ENCODE measurements at regions of chr11 and their contacts with region 1.

Region 1: GRCh38 chr11:44519989-44520737 is 45.3 kb upstream of the CD82 start:
- DNase-seq: no peak
- ATAC-seq: no peak
- H3K4me3 ChIP-seq: no peak overlapping the region
- H3K4me3 Mint-ChIP-seq: no peak overlapping the region
- H3K27ac ChIP-seq: no peak overlapping the region
- H3K27ac Mint-ChIP-seq: no peak overlapping the region
- H3K4me1 ChIP-seq: no peaks in the 10 kb centered on the region
- H3K4me1 Mint-ChIP-seq: peaks cover 3% of the 10 kb centered on the region
- H3K27me3 ChIP-seq: peaks cover 0 to 7% (median 3%) of the 10 kb centered on the region in 4 experiments
- H3K27me3 Mint-ChIP-seq: peaks cover 37% of the 10 kb centered on the region
- CTCF ChIP-seq: no peak

Region 2: GRCh38 chr11:44286268-44286880 is 233.8 kb before region 1 on chr11:
- CTCF ChIA-PET with region 1: interaction called, 6 read pairs
- POLR2A ChIA-PET with region 1: no interaction called
- intact Hi-C with region 1: loop called (anchors 5 kb)
- DNase-seq: peak; percentile 77
- ATAC-seq: peak; percentile 74
- H3K4me3 ChIP-seq: no peak overlapping the region
- H3K4me3 Mint-ChIP-seq: no peak overlapping the region
- H3K27ac ChIP-seq: no peak overlapping the region
- H3K27ac Mint-ChIP-seq: no peak overlapping the region
- H3K4me1 ChIP-seq: no peaks in the 10 kb centered on the region
- H3K4me1 Mint-ChIP-seq: no peaks in the 10 kb centered on the region
- H3K27me3 ChIP-seq: no peaks in the 10 kb centered on the region
- H3K27me3 Mint-ChIP-seq: peaks cover 27% of the 10 kb centered on the region
- CTCF ChIP-seq: peak; percentile 96

Region 3: GRCh38 chr11:44611687-44612434 is 91.7 kb after region 1 on chr11:
- CTCF ChIA-PET with region 1: interaction called, 54 read pairs
- POLR2A ChIA-PET with region 1: interaction called, 7 read pairs
- intact Hi-C with region 1: loop called (anchors 1 kb)
- DNase-seq: peak; percentile 94
- ATAC-seq: peak; percentile 51
- H3K4me3 ChIP-seq: peak overlapping the region in 2 of 5 experiments; percentile 2 to 40
- H3K4me3 Mint-ChIP-seq: peak overlapping the region; percentile 59
- H3K27ac ChIP-seq: peak overlapping the region; percentile 97 to 99
- H3K27ac Mint-ChIP-seq: peak overlapping the region; percentile 96
- H3K4me1 ChIP-seq: peaks cover 97 to 100% of the 10 kb centered on the region in 2 donors
- H3K4me1 Mint-ChIP-seq: peaks cover 97% of the 10 kb centered on the region
- H3K27me3 ChIP-seq: no peaks in the 10 kb centered on the region
- H3K27me3 Mint-ChIP-seq: no peaks in the 10 kb centered on the region
- CTCF ChIP-seq: no peak

Region 4: GRCh38 chr11:44634401-44635281 is 114.5 kb after region 1 on chr11:
- CTCF ChIA-PET with region 1: interaction called, 13 read pairs
- POLR2A ChIA-PET with region 1: no interaction called
- intact Hi-C with region 1: no loop called
- DNase-seq: no peak
- ATAC-seq: no peak
- H3K4me3 ChIP-seq: no peak overlapping the region
- H3K4me3 Mint-ChIP-seq: no peak overlapping the region
- H3K27ac ChIP-seq: no peak overlapping the region
- H3K27ac Mint-ChIP-seq: no peak overlapping the region
- H3K4me1 ChIP-seq: peaks cover 0 to 6% of the 10 kb centered on the region in 2 donors
- H3K4me1 Mint-ChIP-seq: peaks cover 7% of the 10 kb centered on the region
- H3K27me3 ChIP-seq: peaks cover 0 to 17% (median 4%) of the 10 kb centered on the region in 4 experiments
- H3K27me3 Mint-ChIP-seq: peaks cover 21% of the 10 kb centered on the region
- CTCF ChIP-seq: no peak

Region 5: DNA sequence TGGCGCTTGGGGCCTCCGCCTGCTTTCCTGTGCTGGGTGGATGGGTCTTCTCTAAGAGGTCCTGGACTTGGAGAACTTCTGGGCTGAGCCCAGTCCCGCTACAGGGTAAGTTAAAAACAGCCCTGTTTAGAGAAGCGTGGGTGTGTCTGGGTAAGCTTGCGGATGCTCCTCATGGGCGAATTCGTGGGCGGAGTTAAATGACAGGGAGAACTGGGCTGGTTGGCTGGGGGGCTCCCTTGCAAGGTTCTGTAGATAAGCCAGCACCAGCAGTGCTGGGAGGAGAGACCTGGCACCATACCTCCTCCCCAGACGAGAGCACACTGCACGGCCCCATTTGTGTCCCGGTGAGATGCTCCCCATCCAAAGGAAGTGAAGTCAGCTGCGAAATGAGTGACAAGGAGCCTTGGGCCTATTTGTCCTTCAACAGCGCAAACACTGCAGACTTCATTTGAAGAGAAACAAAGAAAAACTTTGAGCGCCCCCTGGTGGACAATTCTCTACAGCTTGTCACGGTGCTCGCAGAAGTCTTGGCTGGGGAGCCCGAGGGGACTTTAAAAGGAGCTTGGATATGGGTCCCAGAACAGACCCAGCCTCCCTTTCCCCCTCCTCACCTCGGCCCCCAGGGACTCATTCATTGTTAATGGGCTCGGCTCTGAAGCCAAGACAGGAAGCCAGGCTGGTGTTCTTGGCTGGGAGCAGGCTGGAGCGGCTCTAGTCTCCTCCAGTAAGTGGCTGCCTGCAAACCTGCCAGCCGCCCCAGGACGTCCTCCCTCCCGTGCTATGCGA is 391.1 kb after region 1 on chr11:
- CTCF ChIA-PET with region 1: interaction called, 24 read pairs
- POLR2A ChIA-PET with region 1: no interaction called
- intact Hi-C with region 1: loop called (anchors 1 kb)
- DNase-seq: peak; percentile 85
- ATAC-seq: peak; percentile 69
- H3K4me3 ChIP-seq: no peak overlapping the region
- H3K4me3 Mint-ChIP-seq: no peak overlapping the region
- H3K27ac ChIP-seq: no peak overlapping the region
- H3K27ac Mint-ChIP-seq: no peak overlapping the region
- H3K4me1 ChIP-seq: peaks cover 23 to 31% of the 10 kb centered on the region in 2 donors
- H3K4me1 Mint-ChIP-seq: peaks cover 24% of the 10 kb centered on the region
- H3K27me3 ChIP-seq: peaks cover 0 to 5% (median 0%) of the 10 kb centered on the region in 4 experiments
- H3K27me3 Mint-ChIP-seq: peaks cover 4% of the 10 kb centered on the region
- CTCF ChIP-seq: peak; percentile 82

Region 6: GRCh38 chr11:46278387-46279125 is 1758.4 kb after region 1 on chr11:
- CTCF ChIA-PET with region 1: no interaction called
- POLR2A ChIA-PET with region 1: no interaction called
- intact Hi-C with region 1: no loop called
- DNase-seq: no peak
- ATAC-seq: no peak
- H3K4me3 ChIP-seq: no peak overlapping the region
- H3K4me3 Mint-ChIP-seq: no peak overlapping the region
- H3K27ac ChIP-seq: no peak overlapping the region
- H3K27ac Mint-ChIP-seq: no peak overlapping the region
- H3K4me1 ChIP-seq: peaks cover 10 to 12% of the 10 kb centered on the region in 2 donors
- H3K4me1 Mint-ChIP-seq: peaks cover 8% of the 10 kb centered on the region
- H3K27me3 ChIP-seq: peaks cover 0 to 53% (median 21%) of the 10 kb centered on the region in 4 experiments
- H3K27me3 Mint-ChIP-seq: peaks cover 61% of the 10 kb centered on the region
- CTCF ChIP-seq: no peak

Measured in B cell (primary cell).